ENCODE measurements at regions of chr11 and their contacts with region 1.

Region 1: GRCh38 chr11:129375751-129376657 is at the start of gene BARX2:
- DNase-seq: peak; percentile 73 to 78
- H3K4me3 ChIP-seq: peak within 1 kb of the TSS; percentile 95
- H3K27ac ChIP-seq: peak within 1 kb of the TSS; percentile 90
- H3K4me1 ChIP-seq: peaks cover 33% of the 10 kb centered on the region
- H3K27me3 ChIP-seq: peaks cover 9% of the 10 kb centered on the region; the same call in 1 of the 2 replicates
- CTCF ChIP-seq: peak; percentile 63
- total RNA-seq, gene BARX2: 13.4 and 16.5 TPM in 2 replicates

Region 2: DNA sequence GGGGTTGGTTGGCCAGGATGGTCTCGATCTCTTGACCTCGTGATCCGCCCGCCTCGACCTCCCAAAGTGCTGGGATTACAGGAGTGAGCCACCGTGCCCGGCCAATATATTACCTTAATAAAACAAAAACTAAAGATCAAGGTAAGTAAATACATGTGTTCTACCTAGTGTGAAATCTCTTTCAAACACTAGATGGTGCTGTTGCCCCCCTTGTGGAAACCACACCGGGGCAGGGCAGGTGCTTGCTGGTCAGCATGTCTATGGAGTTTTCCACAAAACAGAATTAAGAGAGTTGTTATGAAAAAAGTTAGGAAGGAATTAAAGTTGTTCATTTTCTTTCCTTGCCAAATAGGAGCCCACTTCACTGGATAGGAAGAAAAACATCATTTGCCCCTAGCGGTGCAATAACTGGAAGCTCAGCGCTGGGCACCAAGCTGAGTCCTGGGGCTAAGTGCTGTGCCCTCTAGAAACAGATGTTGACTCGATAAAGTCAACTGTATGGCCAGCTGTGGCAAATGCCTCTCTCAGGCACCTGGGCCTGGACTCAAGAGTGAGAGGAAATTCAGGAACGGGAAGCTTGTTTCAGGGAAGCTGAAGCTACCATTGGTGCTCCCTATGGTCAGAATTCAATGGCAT is 491.2 kb before region 1 on chr11:
- CTCF ChIA-PET with region 1: no interaction called
- POLR2A ChIA-PET with region 1: no interaction called
- intact Hi-C with region 1: loop called (anchors 5 kb)
- DNase-seq: peak; percentile 67 to 70
- H3K4me3 ChIP-seq: no peak overlapping the region
- H3K27ac ChIP-seq: no peak overlapping the region
- H3K4me1 ChIP-seq: no peaks in the 10 kb centered on the region
- H3K27me3 ChIP-seq: peaks cover 22% of the 10 kb centered on the region; the same call in 1 of the 2 replicates
- CTCF ChIP-seq: peak; percentile 88

Region 3: DNA sequence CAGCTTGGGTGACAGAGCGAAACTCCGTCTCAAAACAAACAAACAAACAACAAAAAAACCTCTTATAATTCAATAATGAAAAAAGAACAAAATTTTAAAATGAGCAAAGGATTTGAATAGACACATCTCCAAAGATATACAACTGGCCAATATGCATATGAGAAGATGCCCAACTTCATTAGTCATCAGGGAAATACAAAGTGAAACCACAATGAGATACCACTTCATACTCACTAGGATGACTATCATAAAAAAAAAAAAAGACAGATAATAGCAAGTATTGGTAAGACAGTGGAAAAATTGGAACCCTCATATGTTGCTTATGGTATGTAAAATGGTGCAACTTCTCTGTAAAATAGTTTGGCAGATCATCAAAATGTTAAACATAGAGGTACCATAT is 29.1 kb before region 1 on chr11:
- CTCF ChIA-PET with region 1: no interaction called
- POLR2A ChIA-PET with region 1: no interaction called
- intact Hi-C with region 1: no loop called
- DNase-seq: no peak
- H3K4me3 ChIP-seq: no peak overlapping the region
- H3K27ac ChIP-seq: no peak overlapping the region
- H3K4me1 ChIP-seq: no peaks in the 10 kb centered on the region
- H3K27me3 ChIP-seq: no peaks in the 10 kb centered on the region
- CTCF ChIP-seq: no peak

Region 4: DNA sequence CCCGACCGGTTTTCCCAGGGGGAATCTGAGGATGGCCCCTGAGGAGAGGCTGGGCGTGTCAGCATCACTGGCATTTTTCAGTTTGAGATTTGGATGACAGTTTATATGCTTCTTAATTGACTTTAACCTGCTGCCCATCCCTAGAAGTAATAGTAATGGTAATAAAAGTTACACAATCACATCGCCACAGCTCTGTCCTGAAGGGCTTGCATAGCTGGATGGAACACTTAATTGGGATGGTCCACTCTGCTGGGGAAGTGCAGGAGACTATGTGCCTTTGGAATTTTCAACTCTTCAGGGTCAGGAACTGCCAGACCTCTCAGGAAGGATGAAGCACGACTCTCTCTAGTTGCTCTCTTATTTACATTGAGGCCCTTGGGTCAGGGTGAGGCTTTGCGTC is 15.8 kb after region 1 on chr11:
- CTCF ChIA-PET with region 1: no interaction called
- POLR2A ChIA-PET with region 1: no interaction called
- intact Hi-C with region 1: no loop called
- DNase-seq: no peak
- H3K4me3 ChIP-seq: no peak overlapping the region
- H3K27ac ChIP-seq: no peak overlapping the region
- H3K4me1 ChIP-seq: peaks cover 9% of the 10 kb centered on the region
- H3K27me3 ChIP-seq: no peaks in the 10 kb centered on the region
- CTCF ChIP-seq: no peak

Region 5: GRCh38 chr11:129440028-129440713 is 64.2 kb after region 1 on chr11:
- CTCF ChIA-PET with region 1: interaction called, 11 read pairs
- POLR2A ChIA-PET with region 1: interaction called, 9 read pairs
- intact Hi-C with region 1: loop called (anchors 2 kb)
- DNase-seq: peak; percentile 75 to 99
- H3K4me3 ChIP-seq: no peak overlapping the region
- H3K27ac ChIP-seq: peak overlapping the region; percentile 71
- H3K4me1 ChIP-seq: peaks cover 32% of the 10 kb centered on the region
- H3K27me3 ChIP-seq: no peaks in the 10 kb centered on the region
- CTCF ChIP-seq: no peak

Region 6: GRCh38 chr11:129593098-129593497 is 217.1 kb after region 1 on chr11:
- CTCF ChIA-PET with region 1: no interaction called
- POLR2A ChIA-PET with region 1: no interaction called
- intact Hi-C with region 1: loop called (anchors 5 kb)
- DNase-seq: peak; percentile 69 to 91
- H3K4me3 ChIP-seq: no peak overlapping the region
- H3K27ac ChIP-seq: no peak overlapping the region
- H3K4me1 ChIP-seq: peaks cover 15% of the 10 kb centered on the region
- H3K27me3 ChIP-seq: no peaks in the 10 kb centered on the region
- CTCF ChIP-seq: no peak

Region 7: DNA sequence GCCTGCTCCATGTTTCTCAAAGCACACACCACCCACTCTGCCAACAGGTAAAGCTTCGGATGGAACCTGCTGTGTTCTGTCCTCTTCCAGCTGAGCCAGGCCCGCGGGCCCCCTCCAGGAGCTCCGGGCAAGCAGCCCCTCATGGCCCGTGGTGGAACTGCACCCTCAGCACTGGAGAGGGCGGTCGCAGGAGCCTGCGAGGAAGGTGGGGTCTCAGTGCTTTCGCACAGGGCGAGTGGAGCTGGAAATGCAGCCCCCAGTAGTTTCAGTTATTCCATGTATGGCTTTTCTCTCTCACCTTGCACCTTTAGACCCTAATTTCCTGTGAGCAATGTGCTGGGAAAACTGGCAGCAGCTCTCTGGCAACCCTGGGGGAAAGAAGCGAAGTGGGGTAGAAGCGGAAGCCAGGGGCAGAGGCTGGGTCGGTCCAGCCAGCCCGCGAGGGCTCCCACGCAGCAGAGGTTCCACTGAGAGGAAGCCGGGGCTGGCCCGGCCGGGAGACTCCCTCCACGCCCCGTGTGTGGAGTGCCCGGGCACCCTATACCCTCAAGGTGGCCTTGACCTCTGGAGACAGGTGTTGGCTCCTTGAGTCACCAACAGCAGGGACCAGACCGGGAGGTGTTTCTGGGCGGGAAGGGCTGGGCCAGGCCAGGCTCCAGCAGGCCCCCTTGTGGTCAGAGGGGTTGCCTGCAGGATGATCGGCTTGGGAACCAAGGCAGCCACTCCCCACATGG is 319.7 kb after region 1 on chr11:
- CTCF ChIA-PET with region 1: interaction called, 5 read pairs
- POLR2A ChIA-PET with region 1: no interaction called
- intact Hi-C with region 1: loop called (anchors 1 kb)
- DNase-seq: peak; percentile 46 to 57
- H3K4me3 ChIP-seq: no peak overlapping the region
- H3K27ac ChIP-seq: no peak overlapping the region
- H3K4me1 ChIP-seq: peaks cover 14% of the 10 kb centered on the region
- H3K27me3 ChIP-seq: no peaks in the 10 kb centered on the region
- CTCF ChIP-seq: peak; percentile 75

Region 8: DNA sequence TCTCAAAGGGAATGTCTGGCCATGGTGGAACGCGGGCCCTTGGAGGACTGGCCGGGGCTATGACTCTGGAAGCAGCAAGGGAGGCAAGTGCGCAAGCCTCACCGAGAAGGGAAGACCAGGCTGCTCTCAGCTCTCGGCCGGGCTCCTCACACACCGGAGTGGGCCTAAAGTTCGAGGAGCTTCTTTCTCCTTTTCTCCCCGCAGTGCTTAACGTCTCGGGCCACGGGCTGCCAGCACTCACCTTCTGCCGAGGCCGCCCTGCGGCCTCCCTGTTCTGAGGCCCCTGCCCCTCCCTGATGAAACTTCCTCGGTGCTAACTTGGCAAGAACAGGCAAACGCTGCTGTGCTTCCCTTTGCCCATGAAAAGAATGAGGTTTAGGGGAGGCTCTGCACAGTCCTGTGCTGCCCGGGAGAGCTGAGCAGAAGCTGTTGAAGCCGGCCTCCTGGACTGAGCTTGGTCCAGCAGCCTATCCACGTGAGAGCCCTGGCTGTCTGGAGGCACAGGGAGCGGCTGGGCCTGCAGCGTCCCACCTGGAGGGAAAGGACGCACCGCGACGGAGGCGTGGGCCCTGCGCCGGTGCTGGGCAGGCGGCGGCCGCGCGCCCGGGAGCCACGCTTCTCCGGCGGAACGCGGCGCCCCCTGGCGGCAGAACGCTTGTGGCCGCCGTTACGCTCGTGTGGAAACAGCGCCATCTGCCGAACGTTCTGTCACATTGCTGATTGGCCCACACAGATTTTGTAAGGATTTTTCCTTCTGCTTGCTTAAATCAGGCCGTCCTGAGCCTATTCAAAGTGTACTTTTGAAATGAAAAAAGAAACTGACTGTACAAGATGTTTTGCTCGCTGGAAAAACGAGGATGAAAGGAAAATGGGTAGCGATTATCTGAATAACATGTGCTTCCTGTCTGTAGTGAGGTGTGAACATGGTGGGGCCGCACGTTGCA is 374.6 kb after region 1 on chr11:
- CTCF ChIA-PET with region 1: no interaction called
- POLR2A ChIA-PET with region 1: no interaction called
- intact Hi-C with region 1: loop called (anchors 2 kb)
- DNase-seq: peak; percentile 67 to 84
- H3K4me3 ChIP-seq: peak overlapping the region; percentile 40; the same call in 1 of the 2 replicates
- H3K27ac ChIP-seq: no peak overlapping the region
- H3K4me1 ChIP-seq: 0 out of 2 replicates have a peak, but pooled peaks cover 5% of the 10 kb centered on the region
- H3K27me3 ChIP-seq: no peaks in the 10 kb centered on the region
- CTCF ChIP-seq: peak; percentile 93

Measured in PC-9 (cell line).